ENCODE measurements at regions of chr17 and their contacts with region 1.

Region 1: DNA sequence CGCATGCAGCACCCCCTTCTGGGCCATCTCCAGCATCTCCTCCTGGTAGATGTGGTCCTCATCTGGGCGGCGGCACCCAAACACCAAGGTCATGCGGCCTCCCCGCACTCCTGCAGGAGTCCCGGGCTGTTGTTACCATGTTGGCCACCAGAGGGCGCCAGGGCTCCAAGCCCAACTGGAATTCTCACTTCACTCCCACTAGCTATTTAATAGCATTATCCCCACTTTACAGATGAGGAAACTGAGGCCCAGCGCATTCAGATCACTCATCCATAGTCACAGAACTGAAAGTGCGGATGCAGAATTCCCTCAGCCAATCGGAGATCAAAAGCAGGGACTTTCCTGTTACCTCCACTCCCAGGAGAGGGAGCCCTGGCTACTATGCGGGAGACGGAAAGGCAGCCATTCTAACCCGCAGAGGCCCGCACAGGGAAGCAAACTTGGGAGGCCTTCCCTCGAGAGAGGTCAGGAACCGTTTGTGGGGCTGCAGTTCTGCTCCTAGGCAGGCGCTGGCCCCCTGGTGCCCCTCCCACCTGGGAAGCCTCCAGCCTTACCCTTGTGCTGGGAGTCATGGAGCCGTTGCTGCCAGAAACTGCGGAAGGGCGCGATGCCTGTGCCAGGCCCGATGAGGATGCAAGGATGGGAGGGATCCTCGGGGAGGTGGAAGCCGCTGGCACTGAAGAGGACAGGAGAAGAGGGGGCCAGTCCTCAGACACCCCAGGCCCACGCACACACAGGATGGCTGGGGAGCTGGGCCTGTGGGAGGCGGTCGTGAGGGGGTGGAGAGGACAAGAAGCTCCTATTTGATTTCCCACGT is 40.1 kb downstream of the NOS2 start:
- DNase-seq: no peak
- H3K4me3 ChIP-seq: no peak overlapping the region
- H3K27ac ChIP-seq: no peak overlapping the region
- H3K4me1 ChIP-seq: no peaks in the 10 kb centered on the region
- H3K27me3 ChIP-seq: no peaks in the 10 kb centered on the region
- CTCF ChIP-seq: peak; percentile 67 to 94 (median 86)
- POLR2A ChIP-seq: no peak

Region 2: GRCh38 chr17:27654654-27655524 is 105.4 kb before region 1 on chr17:
- intact Hi-C with region 1: loop called (anchors 5 kb)
- DNase-seq: no peak
- H3K4me3 ChIP-seq: no peak overlapping the region
- H3K27ac ChIP-seq: no peak overlapping the region
- H3K4me1 ChIP-seq: no peaks in the 10 kb centered on the region
- H3K27me3 ChIP-seq: peaks cover 0 to 11% (median 0%) of the 10 kb centered on the region in 4 donors
- CTCF ChIP-seq: peak; percentile 84 to 97 (median 90)
- POLR2A ChIP-seq: no peak

Region 3: DNA sequence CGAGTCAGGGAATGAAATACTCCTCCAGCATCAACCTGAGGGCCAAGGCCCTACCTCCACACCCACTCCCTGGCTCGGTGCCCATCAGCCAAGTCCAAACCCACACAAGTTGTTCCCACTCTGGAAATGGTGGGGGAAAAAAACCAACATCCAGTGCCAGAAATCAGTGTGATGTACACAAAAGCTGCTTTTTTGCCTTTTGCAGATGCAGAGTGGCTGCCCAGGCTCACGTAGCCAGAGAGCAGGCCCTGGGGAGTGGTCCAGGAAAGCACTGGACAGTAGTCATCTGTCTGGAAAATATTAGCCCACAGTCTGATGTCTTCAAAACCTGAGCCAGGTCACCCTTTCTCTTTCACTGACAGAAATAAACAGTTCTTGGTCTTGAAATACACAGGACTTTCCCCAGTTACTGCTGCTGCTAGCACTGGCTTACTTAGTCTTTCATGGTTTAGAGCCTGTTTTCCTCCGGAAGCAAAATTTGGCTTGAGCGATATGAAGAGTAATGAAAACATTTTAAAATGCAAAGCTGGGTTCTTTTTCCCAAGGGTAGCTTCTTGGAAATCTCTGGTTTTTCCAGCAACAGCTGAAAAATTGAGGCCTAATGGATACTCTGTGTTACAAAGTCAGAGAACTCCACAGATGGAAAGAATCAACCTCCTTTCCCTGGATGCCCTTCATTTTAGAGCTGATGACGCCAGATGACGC is 58.3 kb after region 1 on chr17:
- intact Hi-C with region 1: no loop called
- DNase-seq: no peak
- H3K4me3 ChIP-seq: no peak overlapping the region
- H3K27ac ChIP-seq: no peak overlapping the region
- H3K4me1 ChIP-seq: peaks cover 0 to 6% (median 4%) of the 10 kb centered on the region in 3 donors
- H3K27me3 ChIP-seq: peaks cover 0 to 42% (median 0%) of the 10 kb centered on the region in 4 donors
- CTCF ChIP-seq: no peak
- POLR2A ChIP-seq: no peak

Region 4: DNA sequence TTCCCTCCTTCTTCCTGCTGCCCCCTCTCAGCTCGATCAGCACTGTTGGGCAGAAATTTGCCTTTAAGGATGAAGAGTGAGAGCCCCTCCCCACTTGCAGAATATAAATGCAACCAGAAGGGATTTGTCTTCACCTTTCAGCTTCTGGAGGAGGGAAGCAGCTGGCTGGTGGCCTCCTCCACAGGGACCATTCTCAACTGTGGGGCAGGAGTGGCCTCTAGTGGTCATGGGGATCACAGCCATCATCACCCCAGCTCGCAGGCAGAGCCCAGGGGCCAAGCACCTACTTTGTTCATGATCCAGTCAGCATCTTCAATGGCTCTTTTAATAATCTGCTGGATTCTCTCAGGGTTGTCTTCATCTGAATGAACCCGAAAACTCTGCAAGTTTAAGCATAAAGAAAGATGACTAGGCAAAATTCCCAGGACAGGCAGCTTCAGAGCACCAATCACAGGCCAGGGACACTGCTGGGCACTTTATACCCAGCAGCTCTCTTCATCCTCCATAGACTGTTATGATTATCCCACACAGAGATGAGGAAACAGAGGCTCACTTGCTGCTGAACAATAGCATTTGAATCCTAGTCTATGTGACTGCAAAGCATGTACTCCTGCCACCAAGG is 119.8 kb after region 1 on chr17:
- intact Hi-C with region 1: loop called (anchors 5 kb)
- DNase-seq: no peak
- H3K4me3 ChIP-seq: no peak overlapping the region
- H3K27ac ChIP-seq: no peak overlapping the region
- H3K4me1 ChIP-seq: no peaks in the 10 kb centered on the region
- H3K27me3 ChIP-seq: no peaks in the 10 kb centered on the region
- CTCF ChIP-seq: peak; percentile 51 to 86 (median 70)
- POLR2A ChIP-seq: no peak

Measured in esophagus squamous epithelium (tissue), 5 donors.